ENCODE measurements at regions of chr22 and their contacts with region 1.

Region 1: GRCh38 chr22:36757668-36758211 is 18.2 kb downstream of the IFT27 start:
- DNase-seq: peak; percentile 52 to 96 (median 79)

Region 2: DNA sequence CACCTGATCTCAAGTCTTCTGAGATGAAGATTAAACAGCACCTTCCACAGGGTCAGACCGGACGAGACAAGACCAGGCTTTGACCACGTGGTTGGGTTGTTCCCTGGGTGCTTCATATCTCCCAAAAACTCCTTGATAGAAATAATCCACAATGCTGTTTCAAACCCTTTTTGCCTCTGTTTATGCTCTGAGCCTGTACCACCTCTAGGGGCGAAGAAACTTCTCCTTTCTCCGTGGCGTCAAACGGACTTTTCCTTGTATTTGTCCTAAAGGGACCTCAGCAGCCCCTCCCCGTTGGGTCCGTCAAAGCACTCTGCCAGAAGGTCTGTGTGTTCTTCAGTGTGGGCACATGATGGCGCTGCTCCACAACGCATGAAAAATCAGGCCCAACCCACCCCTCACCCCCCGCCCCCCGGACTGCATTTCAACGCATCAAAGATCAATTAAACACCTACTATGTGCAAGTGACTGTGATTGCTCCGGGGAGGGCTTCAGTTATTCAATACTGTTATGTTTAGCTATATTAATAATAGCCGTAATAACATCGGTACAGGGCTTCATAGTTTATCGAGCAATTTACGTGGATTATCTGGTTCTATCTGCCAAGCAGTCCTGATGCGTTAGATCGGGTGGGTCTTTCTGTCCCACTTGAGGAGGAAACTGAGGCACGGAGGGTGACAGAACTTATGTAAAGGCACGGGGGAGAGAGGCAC is 211.5 kb before region 1 on chr22:
- intact Hi-C with region 1: loop called (anchors 5 kb)
- DNase-seq: peak in 9 of 10 donors; percentile 38 to 91 (median 55)